ENCODE measurements at regions of chr9 and their contacts with region 1.

Region 1: GRCh38 chr9:97982683-97983588 is at the start of gene ANP32B:
- DNase-seq: peak; percentile 94
- ATAC-seq: peak; percentile 95
- total RNA-seq, gene ANP32B: 145 TPM

Region 2: GRCh38 chr9:97921959-97922724 is 60.8 kb before region 1 on chr9 and contains the start of gene TRMO:
- intact Hi-C with region 1: loop called (anchors 5 kb)
- DNase-seq: peak; percentile 99
- ATAC-seq: peak; percentile 98
- total RNA-seq, gene TRMO: 15.6 TPM

Region 3: DNA sequence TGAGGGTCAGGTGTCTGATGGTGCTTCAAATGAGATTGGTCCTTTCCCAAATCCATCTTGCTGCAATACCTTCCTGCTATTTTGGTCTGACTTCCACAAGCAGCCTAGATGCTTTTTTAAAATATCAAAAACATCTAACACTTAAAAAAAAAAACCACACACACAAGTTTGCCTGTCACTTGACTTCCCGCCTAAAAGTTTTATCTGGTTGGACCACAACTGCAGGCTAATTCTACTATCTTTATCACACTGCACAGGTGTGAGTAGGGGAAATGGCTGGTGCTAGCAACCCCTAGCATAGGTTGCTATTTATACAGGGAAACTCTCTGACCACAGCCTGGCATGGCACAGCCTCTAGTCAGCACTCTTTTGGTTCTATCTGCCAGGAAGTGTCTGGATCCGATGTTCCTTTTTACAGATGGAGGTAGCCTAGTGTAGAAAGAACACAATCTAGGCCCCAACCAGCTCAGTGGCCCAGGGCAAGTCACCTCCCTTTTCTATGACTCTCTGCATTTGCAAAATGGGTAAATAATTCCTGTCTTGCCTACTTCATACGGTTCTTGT is 44.8 kb before region 1 on chr9 and contains the start of gene HEMGN:
- intact Hi-C with region 1: no loop called
- DNase-seq: no peak
- ATAC-seq: no peak
- total RNA-seq, gene HEMGN: 6.4 TPM